ENCODE measurements at regions of chr15 and their contacts with region 1.

Region 1: GRCh38 chr15:57667171-57667849 is 39.2 kb upstream of the POLR2M start:
- DNase-seq: no peak
- ATAC-seq: peak; percentile 63

Region 2: DNA sequence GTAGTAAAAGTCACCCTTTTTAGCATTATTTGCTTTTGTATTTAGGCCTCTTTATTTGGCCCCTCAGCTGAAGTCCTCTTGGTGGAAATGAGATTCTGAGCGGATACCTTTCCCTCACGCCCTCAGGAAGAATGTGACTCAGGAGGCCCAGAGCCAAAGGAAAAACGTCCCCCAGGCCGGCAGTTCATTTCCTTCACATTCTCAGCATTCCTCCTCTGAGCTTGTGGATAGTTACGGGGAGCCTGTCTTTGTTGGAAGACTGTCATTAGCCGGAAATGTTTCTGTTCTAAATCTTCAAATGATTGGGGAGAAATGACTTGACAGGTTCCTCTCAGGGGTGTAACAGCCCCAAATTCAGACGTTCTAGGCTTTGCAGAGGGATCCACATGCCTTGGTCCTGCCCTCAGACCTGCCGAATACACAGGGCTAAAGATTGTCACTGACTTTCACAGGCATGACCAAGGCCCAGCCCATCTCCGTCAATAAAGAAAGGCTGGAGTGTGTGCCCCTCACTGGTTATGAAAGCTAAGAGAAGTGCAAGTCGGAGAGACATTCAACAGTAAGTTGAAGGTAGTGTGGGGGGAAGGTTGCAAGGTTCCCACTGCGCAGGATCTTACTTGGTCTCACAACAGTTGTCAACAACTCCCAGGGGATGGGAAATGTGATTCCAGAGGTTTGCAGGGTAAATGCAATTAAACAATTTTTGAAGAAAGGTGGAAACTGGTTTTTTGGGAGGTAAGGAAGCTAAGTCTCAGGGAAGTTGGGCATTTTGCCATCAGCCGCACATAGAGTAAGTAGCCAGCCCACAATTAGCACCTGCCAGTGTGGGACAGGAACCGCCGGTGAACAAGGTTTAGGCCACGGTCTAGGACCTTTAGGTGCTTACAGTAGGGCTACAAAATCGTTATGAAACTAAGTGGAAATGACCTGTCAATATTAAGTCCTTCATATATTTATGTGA is 115.3 kb before region 1 on chr15:
- intact Hi-C with region 1: no loop called
- DNase-seq: no peak
- ATAC-seq: peak; percentile 34

Region 3: DNA sequence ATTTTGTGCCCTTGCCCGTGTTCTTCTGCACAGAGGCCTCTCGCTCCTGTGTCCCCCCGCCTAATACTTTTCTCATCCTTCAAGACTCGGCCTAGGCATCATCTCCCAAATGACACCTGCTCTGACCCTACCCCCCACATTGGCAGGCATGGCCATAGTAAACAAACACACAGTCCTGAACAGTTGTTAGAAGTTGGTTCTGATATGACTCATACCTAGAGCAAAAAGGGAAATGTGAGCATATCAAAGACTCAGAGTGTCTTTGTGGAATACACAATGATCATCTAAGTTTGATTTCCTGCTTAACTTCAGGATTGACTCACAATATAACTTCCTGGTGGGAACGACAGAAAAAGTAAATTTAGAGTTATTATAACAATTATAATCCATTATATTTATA is 159.7 kb after region 1 on chr15:
- intact Hi-C with region 1: no loop called
- DNase-seq: no peak
- ATAC-seq: no peak

Region 4: DNA sequence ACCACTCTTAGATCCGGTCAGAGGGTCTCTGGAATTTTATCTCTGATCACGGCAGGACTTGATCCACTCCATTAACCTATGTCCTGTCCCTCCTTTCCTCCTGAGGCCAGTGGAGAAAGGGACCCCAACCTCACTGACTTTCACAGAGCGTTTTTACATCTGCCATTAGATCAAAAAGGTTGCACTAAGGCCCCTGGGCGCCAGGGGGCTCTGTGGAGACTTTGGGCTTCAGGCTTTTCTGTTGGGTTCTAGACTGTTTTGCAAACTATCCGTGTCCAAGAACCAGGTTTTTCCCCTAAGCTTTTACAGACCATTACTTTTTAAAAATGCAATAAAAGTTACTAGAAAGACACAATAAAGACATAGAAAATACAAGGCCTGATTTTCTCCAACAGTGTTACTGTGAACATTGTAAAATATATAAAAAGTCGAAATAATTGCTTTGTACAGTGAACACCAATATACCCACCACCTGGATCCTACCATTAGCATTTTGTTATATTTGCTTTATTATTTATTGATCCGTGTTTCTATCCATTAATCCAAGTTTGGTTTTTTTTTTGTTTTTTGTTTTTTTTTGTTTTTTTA is 198.9 kb after region 1 on chr15:
- intact Hi-C with region 1: loop called (anchors 10 kb)
- DNase-seq: peak; percentile 77
- ATAC-seq: peak; percentile 78